ENCODE measurements at regions of chr20 and their contacts with region 1.

Region 1: DNA sequence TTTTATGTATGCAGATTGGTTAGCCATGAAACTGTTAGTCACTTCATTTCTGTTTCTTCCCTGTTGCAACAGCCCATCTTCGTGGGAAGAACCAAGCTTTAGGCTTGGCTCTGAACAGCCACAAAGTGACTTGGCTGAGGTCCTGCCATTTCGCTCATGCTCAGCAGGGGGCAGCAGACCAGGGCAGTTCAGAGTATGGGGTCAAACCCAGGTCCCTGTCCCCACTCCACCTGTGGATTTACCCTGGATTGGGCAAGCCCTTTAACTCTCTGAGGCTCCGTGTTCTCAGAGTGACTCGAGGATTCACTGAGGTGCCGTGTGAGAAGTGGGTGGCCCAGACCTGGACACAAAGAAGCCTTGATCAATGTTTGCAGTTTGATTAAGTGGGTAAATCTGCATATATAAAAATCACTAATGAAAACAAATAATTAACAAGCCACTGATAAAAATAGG is 19.8 kb upstream of the MAP1LC3A start:
- DNase-seq: no peak
- H3K4me3 ChIP-seq: no peak overlapping the region
- H3K27ac ChIP-seq: peak overlapping the region in 1 of 2 donors; percentile 13
- H3K4me1 ChIP-seq: no peaks in the 10 kb centered on the region
- H3K27me3 ChIP-seq: no peaks in the 10 kb centered on the region
- CTCF ChIP-seq: peak; percentile 29 to 56 (median 54)
- POLR2A ChIP-seq: no peak

Region 2: GRCh38 chr20:34495916-34496315 is 42.8 kb before region 1 on chr20:
- intact Hi-C with region 1: no loop called
- DNase-seq: no peak
- H3K4me3 ChIP-seq: no peak overlapping the region
- H3K27ac ChIP-seq: no peak overlapping the region
- H3K4me1 ChIP-seq: no peaks in the 10 kb centered on the region
- H3K27me3 ChIP-seq: no peaks in the 10 kb centered on the region
- CTCF ChIP-seq: no peak
- POLR2A ChIP-seq: no peak

Region 3: DNA sequence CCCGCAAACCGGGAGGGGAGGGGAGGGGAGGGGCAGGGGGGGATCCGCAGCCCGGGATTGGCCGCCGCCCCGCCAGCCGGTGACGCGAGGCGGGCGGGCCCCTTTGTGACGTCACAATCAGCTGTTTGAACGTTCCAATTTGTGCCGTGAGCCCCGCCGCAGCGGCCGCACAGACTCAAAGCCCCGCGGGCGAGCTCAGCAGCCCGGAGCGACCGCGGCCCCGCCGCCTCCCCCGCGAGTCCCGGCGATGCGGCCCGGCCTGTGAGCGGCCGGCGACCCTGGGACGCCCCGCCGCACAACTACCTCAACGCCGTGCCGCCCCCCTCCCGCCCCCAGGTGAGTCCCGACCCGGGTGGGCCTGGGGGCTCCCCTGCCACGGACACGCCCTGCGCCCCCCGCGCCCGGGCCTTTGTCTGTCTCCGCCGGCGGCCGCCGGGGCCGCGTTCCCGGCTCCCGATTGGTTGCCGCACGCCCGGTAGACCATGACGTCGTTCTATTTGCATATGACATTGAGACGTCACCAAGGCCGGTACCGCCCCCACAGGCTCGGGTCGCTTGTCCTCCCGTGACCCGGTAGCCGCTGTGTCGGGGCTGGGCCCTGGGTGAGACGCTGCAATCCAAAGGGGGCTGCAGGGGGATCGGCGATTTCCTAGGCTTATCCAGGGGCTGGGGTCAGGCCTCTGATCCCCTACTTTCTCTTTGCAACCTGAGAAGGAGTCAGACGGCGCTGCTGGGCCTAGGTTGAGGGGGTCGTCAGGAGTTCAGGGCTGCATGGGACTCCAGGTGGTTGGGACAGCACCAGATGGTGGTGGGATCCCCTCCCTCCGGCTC is 165.7 kb after region 1 on chr20 and contains the start of gene TP53INP2:
- intact Hi-C with region 1: loop called (anchors 10 kb)
- DNase-seq: peak; percentile 90 to 93
- H3K4me3 ChIP-seq: peak within 1 kb of the TSS; percentile 93 to 99 (median 97)
- H3K27ac ChIP-seq: peak within 1 kb of the TSS; percentile 100
- H3K4me1 ChIP-seq: peaks cover 0 to 2% of the 10 kb centered on the region in 2 donors
- H3K27me3 ChIP-seq: no peaks in the 10 kb centered on the region
- CTCF ChIP-seq: no peak
- POLR2A ChIP-seq: no peak
- total RNA-seq, gene TP53INP2: 4.7 to 8.0 (median 4.9) TPM